ENCODE measurements at regions of chr9 and their contacts with region 1.

Region 1: GRCh38 chr9:994005-994404 is 17.6 kb downstream of the DMRT3 start:
- DNase-seq: no peak
- H3K4me3 ChIP-seq: no peak overlapping the region
- H3K27ac ChIP-seq: no peak overlapping the region
- H3K4me1 ChIP-seq: peaks cover 18 to 24% of the 10 kb centered on the region in 2 donors
- H3K27me3 ChIP-seq: no peaks in the 10 kb centered on the region
- CTCF ChIP-seq: no peak
- POLR2A ChIP-seq: no peak

Region 2: DNA sequence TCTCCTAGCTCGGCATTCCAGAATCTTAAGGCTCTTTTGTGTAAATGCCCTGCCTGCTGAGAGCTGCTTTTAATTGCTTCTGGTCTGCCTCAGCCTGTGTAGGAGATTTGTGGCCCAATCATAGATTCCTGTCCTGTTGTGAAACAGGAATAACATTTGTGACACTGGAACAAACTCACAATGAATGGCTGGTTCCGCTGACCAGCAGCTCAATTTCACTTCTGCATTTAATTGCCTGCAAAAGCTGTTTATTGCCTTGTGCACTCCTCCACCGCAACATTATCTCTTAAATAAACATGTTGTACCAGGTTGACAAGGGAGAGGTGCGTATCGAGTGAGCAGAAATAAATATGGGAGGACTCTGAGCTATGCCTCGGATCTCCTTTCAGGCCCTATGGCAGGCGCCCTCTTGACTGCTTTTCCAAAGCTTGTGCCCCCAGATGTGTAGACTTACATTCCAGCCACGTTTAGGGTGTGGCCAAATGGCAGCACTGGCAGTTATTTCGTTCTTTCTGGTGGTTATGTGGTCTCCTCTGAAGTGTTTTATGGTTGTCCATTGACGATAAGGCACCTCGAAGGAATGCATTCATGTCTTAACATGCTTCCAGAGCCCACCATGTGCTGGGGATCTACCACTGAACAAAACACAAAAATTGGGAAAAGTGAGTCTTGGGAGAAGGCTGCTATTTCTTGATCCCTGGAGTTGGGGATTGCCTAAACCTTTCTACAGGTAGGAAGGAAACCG is 94.4 kb before region 1 on chr9:
- intact Hi-C with region 1: loop called (anchors 5 kb)
- DNase-seq: no peak
- H3K4me3 ChIP-seq: no peak overlapping the region
- H3K27ac ChIP-seq: peak overlapping the region in 1 of 3 donors; percentile 15
- H3K4me1 ChIP-seq: peaks cover 0 to 9% of the 10 kb centered on the region in 2 donors
- H3K27me3 ChIP-seq: no peaks in the 10 kb centered on the region
- CTCF ChIP-seq: no peak
- POLR2A ChIP-seq: no peak

Region 3: DNA sequence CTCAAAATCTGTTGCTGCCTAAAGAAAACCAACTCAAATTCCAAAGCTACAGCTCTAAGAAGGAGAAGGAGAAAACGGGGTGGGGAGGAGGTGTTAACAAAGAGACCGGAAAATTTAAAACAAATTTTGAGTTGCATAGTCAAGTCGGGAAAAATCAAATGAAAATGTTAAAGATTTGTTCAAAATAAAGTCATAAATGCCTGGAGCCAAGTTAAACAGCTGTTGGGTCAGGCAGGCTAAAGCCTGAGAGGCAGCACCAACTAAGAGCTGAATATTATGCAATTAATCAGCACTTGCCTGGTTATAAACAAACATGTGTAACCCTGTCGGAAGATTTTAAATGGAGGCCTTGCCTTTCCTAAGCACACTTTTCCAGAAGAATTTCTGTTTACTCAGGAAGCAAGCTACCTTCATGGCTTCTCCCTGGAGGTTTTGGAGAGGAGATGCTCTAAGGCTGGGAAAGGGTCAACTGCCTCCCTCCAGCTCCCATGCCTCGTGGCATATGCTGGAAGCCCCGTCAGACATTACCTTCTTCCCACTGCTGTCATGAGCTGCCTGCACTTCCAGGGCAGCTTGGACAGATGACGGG is 326.7 kb after region 1 on chr9:
- intact Hi-C with region 1: no loop called
- DNase-seq: no peak
- H3K4me3 ChIP-seq: no peak overlapping the region
- H3K27ac ChIP-seq: no peak overlapping the region
- H3K4me1 ChIP-seq: no peaks in the 10 kb centered on the region
- H3K27me3 ChIP-seq: no peaks in the 10 kb centered on the region
- CTCF ChIP-seq: no peak
- POLR2A ChIP-seq: no peak

Measured in thyroid gland (tissue), 4 donors.